ENCODE measurements at regions of chr2 and their contacts with region 1.

Region 1: GRCh38 chr2:71510196-71510807 is 56.9 kb downstream of the DYSF start:
- DNase-seq: peak; percentile 77
- H3K4me3 Mint-ChIP-seq: no peak overlapping the region
- H3K27ac Mint-ChIP-seq: no peak overlapping the region
- H3K4me1 Mint-ChIP-seq: no peaks in the 10 kb centered on the region
- H3K27me3 Mint-ChIP-seq: peaks cover 5% of the 10 kb centered on the region

Region 2: DNA sequence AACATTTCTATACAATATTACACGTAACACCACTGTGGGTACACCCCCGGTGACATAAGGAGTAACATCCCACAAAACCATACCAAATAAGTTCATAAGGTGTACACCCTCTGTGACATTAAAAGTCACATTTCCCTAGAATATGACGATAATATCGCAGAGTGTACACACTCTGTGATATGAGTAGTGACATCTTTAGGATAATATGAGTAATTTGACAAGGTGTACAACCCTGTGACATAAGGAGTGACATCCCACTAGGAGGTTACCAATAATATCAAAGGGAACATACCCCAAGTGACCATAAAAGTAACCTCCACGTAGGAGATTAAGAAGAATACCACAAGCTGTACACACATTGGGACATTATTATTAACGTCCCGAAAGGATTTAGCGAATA is 491.7 kb before region 1 on chr2:
- CTCF ChIA-PET with region 1: no interaction called
- POLR2A ChIA-PET with region 1: no interaction called
- intact Hi-C with region 1: loop called (anchors 10 kb)
- DNase-seq: no peak
- H3K4me3 Mint-ChIP-seq: no peak overlapping the region
- H3K27ac Mint-ChIP-seq: no peak overlapping the region
- H3K4me1 Mint-ChIP-seq: peaks cover 7% of the 10 kb centered on the region
- H3K27me3 Mint-ChIP-seq: no peaks in the 10 kb centered on the region

Region 3: GRCh38 chr2:71460595-71461303 is 49.6 kb before region 1 on chr2:
- CTCF ChIA-PET with region 1: interaction called, 61 read pairs
- POLR2A ChIA-PET with region 1: no interaction called
- intact Hi-C with region 1: loop called (anchors 1 kb)
- DNase-seq: no peak
- H3K4me3 Mint-ChIP-seq: no peak overlapping the region
- H3K27ac Mint-ChIP-seq: no peak overlapping the region
- H3K4me1 Mint-ChIP-seq: no peaks in the 10 kb centered on the region
- H3K27me3 Mint-ChIP-seq: peaks cover 5% of the 10 kb centered on the region

Region 4: DNA sequence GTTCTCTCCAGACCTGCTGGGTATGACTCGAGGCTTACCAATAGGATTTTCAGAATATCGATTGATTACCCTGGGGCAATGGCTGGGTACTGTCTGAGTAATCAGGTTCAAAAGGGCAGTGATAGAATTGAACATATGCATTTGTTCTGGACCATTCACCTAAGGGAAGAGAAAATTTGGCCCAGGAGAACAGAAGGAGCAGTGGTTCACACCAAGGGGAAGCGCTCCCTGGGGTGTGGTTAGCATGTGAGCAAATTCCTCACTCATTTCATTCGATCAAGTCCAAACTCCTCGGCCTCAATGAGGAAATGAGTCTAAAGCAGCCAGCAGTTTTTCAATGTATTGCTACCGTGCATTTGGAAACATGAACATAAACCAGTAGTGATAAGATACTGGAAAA is 581.8 kb after region 1 on chr2:
- CTCF ChIA-PET with region 1: no interaction called
- POLR2A ChIA-PET with region 1: no interaction called
- intact Hi-C with region 1: no loop called
- DNase-seq: no peak
- H3K4me3 Mint-ChIP-seq: no peak overlapping the region
- H3K27ac Mint-ChIP-seq: no peak overlapping the region
- H3K4me1 Mint-ChIP-seq: no peaks in the 10 kb centered on the region
- H3K27me3 Mint-ChIP-seq: peaks cover 1% of the 10 kb centered on the region